AG04449 (cell line): ENCODE measurements at regions of chr7 and their contacts with region 1.

Region 1: DNA sequence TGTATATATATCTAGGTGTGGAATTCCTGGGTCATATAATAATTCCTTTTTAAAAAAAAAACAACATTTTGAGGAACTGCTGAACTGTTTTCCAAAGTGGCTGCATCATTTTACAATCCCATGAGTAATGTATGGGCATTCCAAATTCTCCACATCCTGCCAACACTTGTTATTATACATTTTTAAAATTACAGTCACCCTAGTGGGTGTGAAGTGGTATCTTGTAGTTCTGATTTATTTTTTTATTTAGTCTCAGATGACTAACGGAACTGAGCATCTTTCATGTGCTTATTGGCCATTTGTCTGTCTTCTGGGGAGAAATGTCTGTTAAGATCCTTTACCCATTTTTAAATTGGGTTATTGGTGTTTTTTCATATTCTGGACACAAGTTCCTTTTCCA is 12.0 kb upstream of the KLHL7 start:
- DNase-seq: peak; percentile 45
- H3K4me3 ChIP-seq: no peak overlapping the region
- CTCF ChIP-seq: no peak

Region 2: DNA sequence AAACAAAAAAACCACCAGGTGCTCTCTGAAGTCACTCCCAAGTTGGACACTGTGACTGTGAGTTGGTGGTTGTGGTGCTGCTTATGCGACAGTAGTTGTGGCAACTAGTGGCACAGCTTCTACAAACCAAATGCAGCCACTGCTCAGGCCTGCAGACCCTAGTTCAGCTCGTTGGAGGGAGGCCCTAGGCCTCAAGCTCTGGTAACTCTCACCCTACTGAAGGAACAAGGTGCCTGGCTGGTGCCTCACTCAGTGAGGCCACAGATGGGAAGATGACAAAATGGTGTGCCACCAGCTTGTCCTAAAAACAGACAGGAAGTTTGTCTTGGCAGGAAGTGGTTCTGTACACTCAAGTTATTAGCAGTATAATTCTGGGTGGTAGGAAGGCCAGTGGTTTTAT is 691.3 kb before region 1 on chr7:
- CTCF ChIA-PET with region 1: no interaction called
- POLR2A ChIA-PET with region 1: no interaction called
- DNase-seq: no peak
- H3K4me3 ChIP-seq: no peak overlapping the region
- CTCF ChIP-seq: no peak

Region 3: GRCh38 chr7:22586786-22587140 is 506.8 kb before region 1 on chr7:
- CTCF ChIA-PET with region 1: no interaction called
- POLR2A ChIA-PET with region 1: no interaction called
- DNase-seq: no peak
- H3K4me3 ChIP-seq: no peak overlapping the region
- CTCF ChIP-seq: peak; percentile 39

Region 4: DNA sequence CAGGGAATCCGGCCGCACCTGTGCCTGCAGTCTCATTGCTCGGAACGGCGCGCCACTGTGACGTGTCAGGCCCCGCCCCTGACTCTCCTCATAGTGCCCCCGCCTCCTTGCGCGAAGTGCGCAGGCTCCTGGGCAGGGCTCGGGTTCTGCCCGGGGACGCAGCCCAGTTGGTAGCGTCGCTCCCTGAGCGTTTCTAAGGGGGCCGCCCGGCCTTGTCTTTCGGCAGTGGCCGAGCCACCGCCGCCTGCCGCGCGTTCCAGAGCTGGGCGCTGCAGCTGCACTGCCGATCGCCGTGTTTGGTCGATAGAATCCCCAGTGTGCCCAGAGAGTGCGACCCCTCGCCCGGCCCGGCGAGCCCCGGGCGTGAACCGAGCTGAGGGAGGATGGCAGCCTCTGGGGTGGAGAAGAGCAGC is 12.1 kb after region 1 on chr7 and contains the start of gene KLHL7:
- CTCF ChIA-PET with region 1: interaction called, 11 read pairs
- POLR2A ChIA-PET with region 1: no interaction called
- DNase-seq: no peak
- H3K4me3 ChIP-seq: peak within 1 kb of the TSS; percentile 96
- CTCF ChIP-seq: no peak